ENCODE measurements at regions of chr17 and their contacts with region 1.

Region 1: DNA sequence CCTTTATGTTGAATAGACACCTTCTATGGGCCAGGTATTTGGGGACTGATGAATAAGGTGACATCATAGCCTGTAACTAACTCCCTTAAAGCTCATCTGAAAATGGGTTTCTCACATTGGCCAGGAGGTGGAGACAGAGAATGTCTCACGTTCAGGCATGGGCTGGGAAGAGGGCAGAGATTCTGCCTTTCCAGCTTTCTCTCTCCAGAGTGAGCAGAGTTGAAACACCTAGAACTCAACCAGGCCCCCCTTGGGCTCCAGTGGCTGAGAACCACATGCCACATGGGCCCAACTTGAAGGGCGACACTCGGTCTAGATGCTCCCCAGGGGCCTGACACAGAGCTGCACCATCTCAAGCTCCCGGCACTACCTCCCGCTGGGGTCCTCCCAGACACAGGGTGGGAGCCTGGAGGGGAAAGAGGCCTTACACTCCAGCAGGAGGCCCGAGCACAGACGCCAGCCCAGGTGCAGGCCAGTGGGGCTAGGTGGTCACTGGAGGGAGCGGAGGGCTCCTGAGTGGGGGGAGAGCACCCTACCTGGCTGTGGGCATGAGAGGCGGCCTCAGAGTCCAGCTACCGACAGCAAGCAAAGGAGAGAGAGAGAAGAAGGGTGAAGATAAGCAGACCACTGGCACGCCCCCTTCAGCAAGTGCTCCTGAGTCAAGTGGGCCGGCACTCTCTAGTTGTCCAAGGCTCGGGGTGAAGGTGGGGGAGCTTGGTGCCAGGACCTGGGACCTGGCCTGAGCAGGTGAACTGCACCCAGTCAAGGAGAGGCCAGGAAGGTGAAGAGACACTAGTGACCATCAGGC is 55.9 kb downstream of the MYO18A start:
- DNase-seq: peak in 3 of 5 donors; percentile 35 to 66 (median 44)
- H3K4me3 ChIP-seq: no peak overlapping the region
- H3K4me3 Mint-ChIP-seq: no peak overlapping the region
- H3K27ac ChIP-seq: no peak overlapping the region
- H3K27ac Mint-ChIP-seq: peak overlapping the region in 2 of 8 donors; percentile 46 to 50
- H3K4me1 ChIP-seq: no peaks in the 10 kb centered on the region
- H3K4me1 Mint-ChIP-seq: peaks cover 7 to 17% (median 8%) of the 10 kb centered on the region in 3 donors
- H3K27me3 ChIP-seq: no peaks in the 10 kb centered on the region
- H3K27me3 Mint-ChIP-seq: no peaks in the 10 kb centered on the region

Region 2: DNA sequence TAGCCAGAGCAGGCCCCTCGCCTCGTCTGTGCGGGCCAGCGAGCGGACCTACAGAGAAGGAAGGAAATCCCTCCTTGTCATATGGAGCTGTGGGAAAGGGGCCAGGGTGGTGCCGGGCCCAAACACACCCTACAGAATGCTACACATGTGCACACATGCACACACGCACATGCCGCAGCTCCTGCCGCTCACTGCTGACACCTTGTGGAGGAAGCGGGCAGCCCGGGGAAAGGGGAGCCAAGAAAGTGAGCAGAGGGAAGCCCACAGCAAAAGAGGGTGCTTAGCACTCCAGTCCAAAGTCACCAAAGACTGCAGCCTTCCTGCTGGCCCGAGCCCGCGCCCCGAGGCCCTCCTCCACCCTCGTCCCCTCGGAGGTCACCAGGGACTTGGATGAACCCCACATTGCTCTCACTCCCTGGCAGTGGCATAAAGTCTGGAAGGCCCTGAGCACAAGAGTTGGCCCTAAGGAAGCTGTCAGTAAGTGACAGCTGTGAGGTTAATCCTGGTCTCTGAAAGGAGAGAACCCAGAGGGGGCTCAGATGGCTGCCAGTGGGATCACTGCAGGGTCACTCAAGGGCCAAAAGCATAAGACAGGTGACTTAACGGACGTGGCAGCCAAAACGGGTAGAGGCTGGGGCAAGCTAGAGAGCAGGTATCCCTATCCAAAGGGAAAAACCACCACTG is 12.4 kb before region 1 on chr17:
- CTCF ChIA-PET with region 1: interaction called, 60 read pairs
- POLR2A ChIA-PET with region 1: interaction called, 3 read pairs
- DNase-seq: peak; percentile 33 to 71 (median 48)
- H3K4me3 ChIP-seq: no peak overlapping the region
- H3K4me3 Mint-ChIP-seq: no peak overlapping the region
- H3K27ac ChIP-seq: no peak overlapping the region
- H3K27ac Mint-ChIP-seq: peak overlapping the region in 1 of 8 donors; percentile 44
- H3K4me1 ChIP-seq: no peaks in the 10 kb centered on the region
- H3K4me1 Mint-ChIP-seq: peaks cover 2 to 5% (median 3%) of the 10 kb centered on the region in 3 donors
- H3K27me3 ChIP-seq: no peaks in the 10 kb centered on the region
- H3K27me3 Mint-ChIP-seq: no peaks in the 10 kb centered on the region

Region 3: GRCh38 chr17:29140051-29140621 is 15.8 kb after region 1 on chr17:
- CTCF ChIA-PET with region 1: interaction called, 60 read pairs
- POLR2A ChIA-PET with region 1: interaction called, 6 read pairs
- DNase-seq: peak; percentile 70 to 91 (median 74)
- H3K4me3 ChIP-seq: peak overlapping the region; percentile 62
- H3K4me3 Mint-ChIP-seq: peak overlapping the region; percentile 87 to 97 (median 95)
- H3K27ac ChIP-seq: peak overlapping the region; percentile 48
- H3K27ac Mint-ChIP-seq: peak overlapping the region; percentile 97 to 99 (median 98)
- H3K4me1 ChIP-seq: peaks cover 56% of the 10 kb centered on the region
- H3K4me1 Mint-ChIP-seq: peaks cover 61 to 90% (median 76%) of the 10 kb centered on the region in 3 donors
- H3K27me3 ChIP-seq: no peaks in the 10 kb centered on the region
- H3K27me3 Mint-ChIP-seq: peaks cover 0 to 2% of the 10 kb centered on the region in 2 donors

Region 4: GRCh38 chr17:29148790-29149430 is 24.6 kb after region 1 on chr17:
- CTCF ChIA-PET with region 1: interaction called, 38 read pairs
- POLR2A ChIA-PET with region 1: interaction called, 5 read pairs
- DNase-seq: peak; percentile 89 to 94 (median 92)
- H3K4me3 ChIP-seq: peak overlapping the region; percentile 68
- H3K4me3 Mint-ChIP-seq: peak overlapping the region; percentile 76 to 90 (median 80)
- H3K27ac ChIP-seq: peak overlapping the region; percentile 48
- H3K27ac Mint-ChIP-seq: peak overlapping the region; percentile 84 to 96 (median 92)
- H3K4me1 ChIP-seq: peaks cover 26% of the 10 kb centered on the region
- H3K4me1 Mint-ChIP-seq: peaks cover 32 to 56% (median 34%) of the 10 kb centered on the region in 3 donors
- H3K27me3 ChIP-seq: no peaks in the 10 kb centered on the region
- H3K27me3 Mint-ChIP-seq: no peaks in the 10 kb centered on the region

Region 5: GRCh38 chr17:29180034-29180787 is 55.9 kb after region 1 on chr17 and contains the start of gene MYO18A:
- CTCF ChIA-PET with region 1: interaction called, 72 read pairs
- POLR2A ChIA-PET with region 1: no interaction called
- DNase-seq: peak; percentile 68 to 83 (median 71)
- H3K4me3 ChIP-seq: peak within 1 kb of the TSS; percentile 46
- H3K4me3 Mint-ChIP-seq: peak within 1 kb of the TSS; percentile 65 to 91 (median 73)
- H3K27ac ChIP-seq: peak within 1 kb of the TSS; percentile 35
- H3K27ac Mint-ChIP-seq: peak within 1 kb of the TSS in 5 of 8 donors; percentile 10 to 63 (median 45)
- H3K4me1 ChIP-seq: peaks cover 17% of the 10 kb centered on the region
- H3K4me1 Mint-ChIP-seq: peaks cover 23 to 38% (median 26%) of the 10 kb centered on the region in 3 donors
- H3K27me3 ChIP-seq: no peaks in the 10 kb centered on the region
- H3K27me3 Mint-ChIP-seq: peaks cover 4% of the 10 kb centered on the region in 2 donors
- total RNA-seq, gene MYO18A: 34.0 to 39.7 TPM

Region 6: GRCh38 chr17:29212681-29213121 is 88.4 kb after region 1 on chr17:
- CTCF ChIA-PET with region 1: interaction called, 10 read pairs
- POLR2A ChIA-PET with region 1: no interaction called
- DNase-seq: no peak
- H3K4me3 ChIP-seq: no peak overlapping the region
- H3K4me3 Mint-ChIP-seq: no peak overlapping the region
- H3K27ac ChIP-seq: no peak overlapping the region
- H3K27ac Mint-ChIP-seq: no peak overlapping the region
- H3K4me1 ChIP-seq: no peaks in the 10 kb centered on the region
- H3K4me1 Mint-ChIP-seq: no peaks in the 10 kb centered on the region
- H3K27me3 ChIP-seq: no peaks in the 10 kb centered on the region
- H3K27me3 Mint-ChIP-seq: no peaks in the 10 kb centered on the region

Region 7: GRCh38 chr17:29219378-29220047 is 95.2 kb after region 1 on chr17:
- CTCF ChIA-PET with region 1: interaction called, 36 read pairs
- POLR2A ChIA-PET with region 1: no interaction called
- DNase-seq: peak; percentile 57 to 79 (median 63)
- H3K4me3 ChIP-seq: no peak overlapping the region
- H3K4me3 Mint-ChIP-seq: peak overlapping the region in 1 of 7 donors; percentile 13
- H3K27ac ChIP-seq: no peak overlapping the region
- H3K27ac Mint-ChIP-seq: peak overlapping the region in 3 of 8 donors; percentile 17 to 54 (median 26)
- H3K4me1 ChIP-seq: peaks cover 4% of the 10 kb centered on the region
- H3K4me1 Mint-ChIP-seq: peaks cover 8 to 10% (median 9%) of the 10 kb centered on the region in 3 donors
- H3K27me3 ChIP-seq: no peaks in the 10 kb centered on the region
- H3K27me3 Mint-ChIP-seq: peaks cover 0 to 7% of the 10 kb centered on the region in 2 donors